PC-3 (cell line): ENCODE measurements at regions of chr13 and their contacts with region 1.

Region 1: GRCh38 chr13:49731766-49732165 is 40.5 kb upstream of the EBPL start:
- DNase-seq: peak; percentile 66
- ATAC-seq: peak; percentile 81
- H3K4me3 ChIP-seq: no peak overlapping the region
- H3K27ac ChIP-seq: no peak overlapping the region
- H3K4me1 ChIP-seq: peaks cover 15% of the 10 kb centered on the region
- H3K27me3 ChIP-seq: no peaks in the 10 kb centered on the region
- CTCF ChIP-seq: no peak

Region 2: DNA sequence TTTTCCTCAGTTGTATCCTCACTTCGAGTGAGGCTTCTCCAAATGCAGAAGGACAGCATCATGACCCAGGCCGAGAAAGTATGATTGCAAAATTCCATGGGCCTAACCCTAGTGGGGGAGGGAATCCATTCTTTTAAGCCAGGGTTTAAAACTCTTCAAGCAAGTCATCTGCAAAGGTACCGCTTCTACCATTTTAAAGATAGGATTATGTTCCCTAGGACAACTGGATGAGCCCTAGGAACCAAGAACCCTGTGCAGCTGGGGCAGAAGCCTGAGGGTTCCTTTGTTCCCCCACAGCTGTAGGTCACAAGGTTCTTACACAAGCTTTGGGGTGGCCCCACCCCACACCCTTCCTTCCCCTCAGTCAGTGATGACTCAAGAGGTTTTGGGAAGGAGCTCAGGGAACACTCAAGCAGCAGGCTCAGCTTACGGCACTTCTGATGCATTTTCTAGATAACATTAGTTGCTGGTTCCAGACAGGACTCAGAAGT is 89.9 kb before region 1 on chr13:
- CTCF ChIA-PET with region 1: no interaction called
- POLR2A ChIA-PET with region 1: no interaction called
- intact Hi-C with region 1: no loop called
- DNase-seq: peak; percentile 36
- ATAC-seq: peak; percentile 77
- H3K4me3 ChIP-seq: no peak overlapping the region
- H3K27ac ChIP-seq: no peak overlapping the region
- H3K4me1 ChIP-seq: peaks cover 4% of the 10 kb centered on the region; the same call in 1 of the 2 replicates
- H3K27me3 ChIP-seq: no peaks in the 10 kb centered on the region
- CTCF ChIP-seq: no peak

Region 3: GRCh38 chr13:49690992-49691886 is 40.5 kb before region 1 on chr13 and contains the start of gene EBPL:
- CTCF ChIA-PET with region 1: no interaction called
- POLR2A ChIA-PET with region 1: no interaction called
- intact Hi-C with region 1: loop called (anchors 1 kb)
- DNase-seq: peak; percentile 92
- ATAC-seq: peak; percentile 88
- H3K4me3 ChIP-seq: peak within 1 kb of the TSS; percentile 98
- H3K27ac ChIP-seq: peak within 1 kb of the TSS; percentile 85
- H3K4me1 ChIP-seq: peaks cover 30% of the 10 kb centered on the region
- H3K27me3 ChIP-seq: no peaks in the 10 kb centered on the region
- CTCF ChIP-seq: no peak
- total RNA-seq, gene EBPL: 108 and 118 TPM in 2 replicates

Region 4: DNA sequence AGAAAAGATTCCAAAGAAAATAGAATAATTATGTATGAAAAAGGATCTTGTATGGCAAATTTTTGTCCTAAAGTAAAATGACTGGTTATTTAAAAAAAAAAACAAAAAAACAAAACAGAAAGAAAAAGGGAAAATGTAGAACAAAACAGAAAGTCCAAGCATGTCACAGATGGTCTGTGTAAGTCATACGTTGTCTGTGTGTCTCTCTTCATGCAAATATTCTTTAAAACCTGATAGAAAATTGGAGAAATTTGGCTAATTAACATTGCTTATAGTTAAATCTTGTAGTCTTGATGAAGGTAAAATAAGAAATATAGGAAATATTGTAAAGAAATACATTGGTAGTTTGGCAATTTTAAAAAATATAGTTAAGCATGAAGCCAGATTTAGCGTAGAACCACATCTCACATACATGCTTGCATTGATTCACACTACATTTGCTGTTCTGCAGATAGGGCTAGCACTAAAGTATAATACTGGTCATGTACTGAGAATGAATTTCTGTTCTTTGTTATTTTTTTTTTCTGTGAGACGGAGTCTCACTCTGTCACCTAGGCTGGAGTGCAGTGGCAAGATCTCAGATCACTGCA is 146.0 kb after region 1 on chr13:
- CTCF ChIA-PET with region 1: no interaction called
- POLR2A ChIA-PET with region 1: no interaction called
- intact Hi-C with region 1: no loop called
- DNase-seq: peak; percentile 22
- ATAC-seq: no peak
- H3K4me3 ChIP-seq: no peak overlapping the region
- H3K27ac ChIP-seq: no peak overlapping the region
- H3K4me1 ChIP-seq: no peaks in the 10 kb centered on the region
- H3K27me3 ChIP-seq: no peaks in the 10 kb centered on the region
- CTCF ChIP-seq: no peak